ENCODE measurements at regions of chr17 and their contacts with region 1.

Region 1: DNA sequence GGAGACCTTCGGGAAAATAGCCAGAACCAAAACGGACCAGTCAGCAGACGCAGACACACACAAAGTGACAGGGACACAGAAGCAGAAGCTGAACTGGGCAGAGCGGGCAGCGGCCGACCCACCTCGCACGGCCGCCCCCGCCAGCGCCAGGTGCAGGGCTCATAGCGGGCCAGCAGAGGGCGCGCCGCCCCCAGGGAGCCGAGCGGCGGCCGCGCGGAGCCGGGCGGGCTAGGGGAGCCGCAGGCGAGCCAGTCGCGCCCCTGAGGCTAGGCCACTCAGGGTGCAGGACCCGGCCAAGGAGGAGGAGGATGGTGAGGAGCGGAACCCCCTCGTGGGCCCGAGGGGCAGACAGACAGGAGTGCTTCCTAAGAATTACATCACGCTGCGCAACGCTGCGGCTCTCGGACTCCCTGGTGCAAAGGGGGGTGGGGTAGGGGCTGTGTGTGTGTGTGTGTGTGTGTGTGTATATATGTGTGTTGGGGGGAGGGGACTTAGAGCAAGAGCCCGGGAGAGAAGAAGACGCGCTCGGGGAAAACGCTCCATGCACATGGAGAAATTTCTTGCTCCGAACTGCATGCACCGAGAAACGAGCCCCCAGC is 913 bp upstream of the NOG start:
- DNase-seq: peak; percentile 50 to 87 (median 84)
- ATAC-seq: peak; percentile 83
- H3K4me3 ChIP-seq: peak overlapping the region; percentile 45
- H3K27ac ChIP-seq: no peak overlapping the region
- H3K4me1 ChIP-seq: peaks cover 3% of the 10 kb centered on the region
- H3K27me3 ChIP-seq: no peaks in the 10 kb centered on the region

Region 2: DNA sequence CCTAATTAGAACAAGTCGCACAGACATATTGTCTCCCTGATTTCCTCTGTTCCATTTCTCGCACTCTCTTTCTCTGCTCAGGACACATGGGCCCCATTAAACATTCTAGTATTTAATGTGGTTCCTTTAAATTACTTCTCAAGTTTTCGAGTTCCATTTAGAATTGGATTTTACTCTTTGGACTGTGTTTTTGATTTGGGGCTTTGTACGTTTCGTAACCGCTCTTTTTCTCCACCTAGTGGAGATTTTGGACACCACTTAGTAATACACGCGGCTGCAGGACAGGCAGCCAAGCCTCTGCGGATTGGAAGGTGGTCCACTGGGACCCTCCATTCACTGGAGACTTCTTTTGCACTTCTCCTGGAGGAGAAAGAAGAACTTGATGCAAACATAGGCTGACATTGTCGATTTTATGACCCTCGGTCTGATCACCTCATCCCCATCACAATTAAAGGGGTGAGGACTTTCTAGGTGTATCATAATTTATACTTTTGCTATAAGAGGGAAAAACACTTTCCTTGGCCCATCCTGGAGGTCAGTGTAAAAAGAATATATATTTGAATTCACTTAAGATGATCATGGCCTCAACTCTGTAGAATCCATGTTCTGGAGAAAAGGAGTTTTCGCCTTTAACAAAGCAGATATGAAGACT is 86.7 kb after region 1 on chr17:
- intact Hi-C with region 1: loop called in 2 of 4 experiments (anchors 10 kb)
- DNase-seq: no peak
- ATAC-seq: peak; percentile 60 to 67
- H3K4me3 ChIP-seq: peak overlapping the region; percentile 26
- H3K27ac ChIP-seq: no peak overlapping the region
- H3K4me1 ChIP-seq: no peaks in the 10 kb centered on the region
- H3K27me3 ChIP-seq: no peaks in the 10 kb centered on the region

Region 3: DNA sequence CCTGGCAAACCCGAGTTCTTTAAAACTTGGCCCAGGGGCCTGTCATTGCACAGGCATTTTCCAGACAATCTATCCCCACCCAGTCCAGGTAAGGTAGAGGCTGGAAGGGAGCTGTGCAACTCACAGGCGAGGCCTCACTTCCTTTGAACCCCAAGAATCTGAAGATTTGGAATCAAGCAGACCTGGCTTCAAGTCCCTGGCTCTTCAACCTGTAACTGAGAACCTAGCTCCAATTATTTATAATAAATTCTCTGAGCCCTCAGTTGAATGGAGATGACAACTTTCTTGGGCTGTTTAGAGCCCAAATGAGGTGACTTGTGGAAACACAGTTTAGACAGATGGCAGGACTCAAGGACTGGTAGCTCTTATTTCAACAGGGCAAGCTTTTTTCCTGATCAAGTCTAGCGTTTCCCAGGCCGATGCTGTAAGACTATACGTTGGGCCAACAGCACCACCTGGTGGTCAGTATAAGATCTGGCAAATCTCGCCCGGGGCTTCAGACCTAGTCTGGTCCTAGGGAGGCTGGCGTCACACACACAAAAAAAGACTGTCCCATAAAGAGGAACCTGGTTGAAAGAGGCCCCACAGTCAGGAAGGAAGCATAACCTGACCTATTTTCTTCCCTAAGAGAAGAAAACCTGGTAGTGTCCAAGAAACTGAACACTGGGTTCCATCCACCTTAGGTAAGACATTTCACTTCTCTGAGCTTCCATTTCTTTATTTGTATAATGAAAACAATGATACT is 123.2 kb after region 1 on chr17:
- intact Hi-C with region 1: loop called (anchors 2 to 5 kb)
- DNase-seq: peak; percentile 76 to 87 (median 84)
- ATAC-seq: peak; percentile 86 to 94
- H3K4me3 ChIP-seq: no peak overlapping the region
- H3K27ac ChIP-seq: no peak overlapping the region
- H3K4me1 ChIP-seq: no peaks in the 10 kb centered on the region
- H3K27me3 ChIP-seq: no peaks in the 10 kb centered on the region

Region 4: GRCh38 chr17:56779898-56780733 is 187.5 kb after region 1 on chr17:
- intact Hi-C with region 1: loop called in 3 of 4 experiments (anchors 5 kb)
- DNase-seq: peak; percentile 70 to 89 (median 88)
- ATAC-seq: peak; percentile 92 to 96
- H3K4me3 ChIP-seq: peak overlapping the region; percentile 54
- H3K27ac ChIP-seq: no peak overlapping the region
- H3K4me1 ChIP-seq: peaks cover 2% of the 10 kb centered on the region
- H3K27me3 ChIP-seq: no peaks in the 10 kb centered on the region

Measured in right cardiac atrium (tissue), 5 donors.